ENCODE measurements at regions of chr11 and their contacts with region 1.

Region 1: GRCh38 chr11:121194731-121195596 is 93.9 kb downstream of the TECTA start:
- DNase-seq: peak; percentile 31
- ATAC-seq: peak; percentile 99
- H3K4me3 ChIP-seq: no peak overlapping the region
- H3K27ac ChIP-seq: no peak overlapping the region
- H3K4me1 ChIP-seq: no peaks in the 10 kb centered on the region
- H3K27me3 ChIP-seq: no peaks in the 10 kb centered on the region
- CTCF ChIP-seq: peak; percentile 72 to 84 (median 83)
- EP300 ChIP-seq: no peak
- POLR2A ChIP-seq: no peak
- RAD21 ChIP-seq: peak; percentile 86

Region 2: GRCh38 chr11:120842195-120842594 is 352.8 kb before region 1 on chr11:
- CTCF ChIA-PET with region 1: no interaction called
- POLR2A ChIA-PET with region 1: no interaction called
- RAD21 ChIA-PET with region 1: no interaction called
- SMC1A ChIA-PET with region 1: no interaction called
- in situ Hi-C with region 1: no loop called
- intact Hi-C with region 1: no loop called
- DNase-seq: no peak
- ATAC-seq: no peak
- H3K4me3 ChIP-seq: no peak overlapping the region
- H3K27ac ChIP-seq: no peak overlapping the region
- H3K4me1 ChIP-seq: peaks cover 3% of the 10 kb centered on the region; the same call in 1 of the 2 replicates
- H3K27me3 ChIP-seq: no peaks in the 10 kb centered on the region
- CTCF ChIP-seq: no peak
- EP300 ChIP-seq: no peak
- POLR2A ChIP-seq: no peak
- RAD21 ChIP-seq: no peak

Region 3: GRCh38 chr11:120952461-120953434 is 242.2 kb before region 1 on chr11:
- CTCF ChIA-PET with region 1: interaction called, 9 read pairs
- POLR2A ChIA-PET with region 1: no interaction called
- RAD21 ChIA-PET with region 1: no interaction called
- SMC1A ChIA-PET with region 1: no interaction called
- in situ Hi-C with region 1: no loop called
- intact Hi-C with region 1: loop called (anchors 10 kb)
- DNase-seq: peak; percentile 26
- ATAC-seq: peak; percentile 91
- H3K4me3 ChIP-seq: no peak overlapping the region
- H3K27ac ChIP-seq: no peak overlapping the region
- H3K4me1 ChIP-seq: peaks cover 8% of the 10 kb centered on the region
- H3K27me3 ChIP-seq: no peaks in the 10 kb centered on the region; a peak in 1 of 4 replicates
- CTCF ChIP-seq: peak; percentile 80 to 96 (median 83)
- EP300 ChIP-seq: no peak
- POLR2A ChIP-seq: no peak
- RAD21 ChIP-seq: peak; percentile 97

Region 4: GRCh38 chr11:121105063-121105480 is 89.9 kb before region 1 on chr11:
- CTCF ChIA-PET with region 1: interaction called, 9 read pairs
- POLR2A ChIA-PET with region 1: no interaction called
- RAD21 ChIA-PET with region 1: no interaction called
- SMC1A ChIA-PET with region 1: interaction called, 5 read pairs
- in situ Hi-C with region 1: no loop called
- intact Hi-C with region 1: loop called (anchors 5 kb)
- DNase-seq: no peak
- ATAC-seq: no peak
- H3K4me3 ChIP-seq: no peak overlapping the region
- H3K27ac ChIP-seq: no peak overlapping the region
- H3K4me1 ChIP-seq: no peaks in the 10 kb centered on the region
- H3K27me3 ChIP-seq: peaks cover 0 to 2% of the 10 kb centered on the region in 2 experiments; a peak in 1 of 4 replicates
- CTCF ChIP-seq: no peak
- EP300 ChIP-seq: no peak
- POLR2A ChIP-seq: no peak
- RAD21 ChIP-seq: no peak

Region 5: GRCh38 chr11:121221801-121222200 is 26.8 kb after region 1 on chr11:
- CTCF ChIA-PET with region 1: interaction called, 10 read pairs
- POLR2A ChIA-PET with region 1: no interaction called
- RAD21 ChIA-PET with region 1: no interaction called
- SMC1A ChIA-PET with region 1: no interaction called
- in situ Hi-C with region 1: no loop called
- intact Hi-C with region 1: no loop called
- DNase-seq: no peak
- ATAC-seq: no peak
- H3K4me3 ChIP-seq: no peak overlapping the region
- H3K27ac ChIP-seq: no peak overlapping the region
- H3K4me1 ChIP-seq: no peaks in the 10 kb centered on the region
- H3K27me3 ChIP-seq: peaks cover 2 to 4% of the 10 kb centered on the region in 2 experiments; a peak in 3 of 4 replicates
- CTCF ChIP-seq: no peak
- EP300 ChIP-seq: no peak
- POLR2A ChIP-seq: no peak
- RAD21 ChIP-seq: no peak